ENCODE measurements at regions of chr9 and their contacts with region 1.

Region 1: DNA sequence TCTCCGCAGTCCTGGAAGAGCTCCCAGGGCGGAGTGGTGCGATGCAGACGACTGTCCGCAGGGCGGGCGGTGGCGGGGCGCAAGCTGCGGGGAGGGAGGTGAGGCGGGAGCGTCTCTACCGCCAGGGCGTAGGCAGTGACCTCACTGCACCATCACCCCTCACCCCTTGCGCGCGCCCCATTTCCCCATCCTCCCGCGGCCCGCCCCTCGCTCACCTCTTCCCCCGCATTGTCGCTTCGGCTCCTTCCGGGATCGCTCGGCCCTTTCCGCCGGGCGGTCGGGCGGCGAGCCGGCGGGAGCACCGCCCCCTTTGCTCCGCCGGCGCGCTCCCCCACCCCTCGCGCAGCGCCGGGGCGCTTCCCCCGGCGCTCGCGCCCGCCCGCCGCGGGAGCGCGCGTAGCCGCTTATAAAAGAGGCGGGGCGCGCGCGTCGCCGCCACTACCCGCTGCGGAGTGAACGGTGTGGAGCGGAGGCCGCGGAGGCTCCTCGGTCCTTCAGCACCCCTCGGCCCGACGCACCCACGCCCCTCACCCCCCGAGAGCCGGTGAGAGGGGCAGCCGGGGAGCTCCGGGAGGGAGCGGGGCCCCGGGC is at the start of gene SPTAN1:
- DNase-seq: peak; percentile 93
- H3K4me3 Mint-ChIP-seq: peak within 1 kb of the TSS; percentile 89
- H3K27ac Mint-ChIP-seq: peak within 1 kb of the TSS; percentile 91
- H3K4me1 Mint-ChIP-seq: peaks cover 43% of the 10 kb centered on the region
- H3K27me3 Mint-ChIP-seq: no peaks in the 10 kb centered on the region
- total RNA-seq, gene SPTAN1: 298 and 304 TPM in 2 replicates

Region 2: DNA sequence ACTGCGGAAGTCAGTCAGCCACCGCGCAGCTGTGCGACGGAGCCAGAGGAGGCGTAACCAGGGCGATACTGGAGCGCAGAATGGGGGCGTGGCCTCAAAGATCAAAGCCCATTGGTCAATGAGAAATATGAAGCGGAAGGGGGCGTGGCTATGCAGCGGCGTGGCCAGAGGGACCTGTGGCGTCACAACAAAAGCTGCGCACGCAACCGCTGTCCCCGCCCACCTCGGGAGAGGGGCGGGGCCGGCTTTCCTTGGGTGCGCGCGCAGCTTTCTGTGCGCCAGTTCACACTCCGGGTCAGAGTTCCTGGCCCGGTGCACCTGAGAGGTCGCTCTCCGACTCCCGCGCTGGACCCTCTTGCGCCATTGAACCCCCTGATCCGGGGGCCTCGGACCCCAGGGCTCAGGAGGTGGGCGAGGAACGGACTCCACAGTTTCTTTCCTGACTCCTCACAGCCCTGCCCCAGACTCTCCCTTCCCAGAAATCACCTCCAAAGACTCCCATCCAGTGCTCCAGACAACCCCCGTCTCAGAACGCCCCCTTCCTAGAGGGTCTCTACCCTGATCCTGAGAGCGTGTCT is 276.2 kb before region 1 on chr9 and contains the starts of genes GOLGA2 and SWI5:
- intact Hi-C with region 1: loop called (anchors 5 kb)
- DNase-seq: peak; percentile 100
- H3K4me3 Mint-ChIP-seq: peak within 1 kb of the TSS; percentile 98
- H3K27ac Mint-ChIP-seq: peak within 1 kb of the TSS; percentile 91
- H3K4me1 Mint-ChIP-seq: peaks cover 54% of the 10 kb centered on the region
- H3K27me3 Mint-ChIP-seq: no peaks in the 10 kb centered on the region
- total RNA-seq, gene GOLGA2: 52.3 and 53.0 TPM in 2 replicates
- total RNA-seq, gene SWI5: 10.4 and 13.3 TPM in 2 replicates

Region 3: GRCh38 chr9:128455849-128456612 is 96.2 kb before region 1 on chr9 and contains the start of gene ODF2:
- intact Hi-C with region 1: loop called (anchors 1 kb)
- DNase-seq: peak; percentile 98
- H3K4me3 Mint-ChIP-seq: peak within 1 kb of the TSS; percentile 93
- H3K27ac Mint-ChIP-seq: peak within 1 kb of the TSS; percentile 98
- H3K4me1 Mint-ChIP-seq: peaks cover 13% of the 10 kb centered on the region
- H3K27me3 Mint-ChIP-seq: peaks cover 3% of the 10 kb centered on the region
- total RNA-seq, gene ODF2: 55.6 and 57.6 TPM in 2 replicates

Region 4: GRCh38 chr9:128656416-128657343 is 104.4 kb after region 1 on chr9 and contains the start of gene DYNC2I2:
- intact Hi-C with region 1: loop called (anchors 1 kb)
- DNase-seq: peak; percentile 95
- H3K4me3 Mint-ChIP-seq: peak within 1 kb of the TSS; percentile 91
- H3K27ac Mint-ChIP-seq: peak within 1 kb of the TSS; percentile 100
- H3K4me1 Mint-ChIP-seq: peaks cover 15% of the 10 kb centered on the region
- H3K27me3 Mint-ChIP-seq: no peaks in the 10 kb centered on the region
- total RNA-seq, gene DYNC2I2: 41.5 and 43.9 TPM in 2 replicates

Region 5: DNA sequence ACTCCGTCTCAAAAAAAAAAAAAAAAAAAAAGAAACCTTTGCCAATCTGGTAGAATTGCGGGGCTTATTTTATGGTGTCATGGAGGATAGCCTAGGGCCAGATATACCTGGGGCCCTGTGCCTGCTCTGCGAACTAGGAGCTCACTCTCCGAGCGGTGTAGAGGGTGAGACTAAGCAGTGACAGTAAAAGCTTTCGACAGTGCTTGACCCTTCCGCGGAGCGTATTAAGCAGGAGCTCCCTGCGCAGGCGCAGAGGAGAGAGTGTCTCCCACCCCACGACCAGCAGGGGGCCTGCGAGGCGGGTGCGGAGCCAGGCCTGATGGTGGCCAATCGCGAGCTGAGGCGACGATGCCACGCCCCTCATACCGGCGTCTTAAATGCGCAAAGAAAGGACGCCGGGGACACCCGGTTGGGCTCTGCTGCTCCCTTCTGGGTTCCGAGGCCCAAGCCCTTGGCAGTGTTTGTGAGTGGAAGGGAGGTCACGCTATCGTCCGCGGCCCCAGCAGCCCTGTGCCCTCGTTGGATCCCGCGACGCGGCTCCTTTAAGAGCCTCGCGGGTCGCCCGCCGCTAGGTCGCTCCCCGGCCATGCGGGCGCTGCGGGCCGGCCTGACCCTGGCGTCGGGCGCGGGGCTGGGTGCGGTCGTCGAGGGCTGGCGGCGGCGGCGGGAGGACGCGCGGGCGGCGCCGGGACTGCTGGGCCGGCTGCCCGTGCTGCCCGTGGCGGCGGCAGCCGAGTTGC is 266.0 kb after region 1 on chr9 and contains the start of gene ENDOG:
- intact Hi-C with region 1: loop called (anchors 2 kb)
- DNase-seq: peak; percentile 99
- H3K4me3 Mint-ChIP-seq: peak within 1 kb of the TSS; percentile 88
- H3K27ac Mint-ChIP-seq: peak within 1 kb of the TSS; percentile 79
- H3K4me1 Mint-ChIP-seq: peaks cover 14% of the 10 kb centered on the region
- H3K27me3 Mint-ChIP-seq: no peaks in the 10 kb centered on the region
- total RNA-seq, gene ENDOG: 22.1 and 26.2 TPM in 2 replicates

Region 6: DNA sequence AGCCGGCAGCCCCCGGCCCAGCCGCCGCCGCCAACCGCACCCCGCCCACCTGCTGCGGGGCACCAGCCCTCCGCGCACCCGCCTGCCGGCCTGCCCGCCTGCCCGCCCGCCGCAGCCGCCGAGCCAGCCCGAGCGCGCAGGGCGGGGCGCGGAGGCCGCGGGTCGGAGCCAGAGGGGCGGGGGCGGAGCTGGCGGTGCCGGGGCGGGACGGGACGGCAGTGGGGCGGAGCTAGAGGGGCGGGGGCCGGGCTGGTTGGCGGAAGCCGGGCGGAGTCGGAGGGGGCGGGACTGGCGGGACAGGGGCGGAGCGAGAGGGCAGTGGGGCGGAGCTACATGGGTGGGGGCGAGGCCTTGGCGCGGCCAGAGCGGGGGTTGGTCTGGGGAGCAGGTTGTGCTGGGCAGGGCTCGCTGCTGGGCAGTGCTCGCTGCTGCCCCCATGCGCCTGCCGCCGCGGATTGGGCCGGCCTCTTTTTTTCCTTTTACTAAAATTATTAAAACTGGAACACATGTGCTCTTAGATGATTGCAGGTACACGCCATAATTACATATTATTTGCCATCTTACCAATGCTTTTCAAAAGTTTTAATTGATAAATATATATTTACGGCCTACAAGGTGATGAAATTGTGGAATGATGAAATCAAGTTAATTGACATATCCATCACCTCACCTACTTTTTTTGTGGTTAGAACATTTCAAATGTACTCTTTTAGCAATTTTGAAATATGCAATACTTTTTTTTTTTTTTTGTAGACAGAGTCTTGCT is 476.1 kb after region 1 on chr9 and contains the start of gene SH3GLB2:
- intact Hi-C with region 1: loop called (anchors 5 kb)
- DNase-seq: peak; percentile 85
- H3K4me3 Mint-ChIP-seq: peak within 1 kb of the TSS; percentile 91
- H3K27ac Mint-ChIP-seq: peak within 1 kb of the TSS; percentile 80
- H3K4me1 Mint-ChIP-seq: peaks cover 24% of the 10 kb centered on the region
- H3K27me3 Mint-ChIP-seq: no peaks in the 10 kb centered on the region
- total RNA-seq, gene SH3GLB2: 71.1 and 74.8 TPM in 2 replicates

Measured in activated T-helper 1 cell treated with anti-CD3 and anti-CD28 coated beads, Interleukin-12 subunit alpha, Interleukin-12 subunit beta, Interleukin-2, Interleukin-4 antibody, amounts not matched to agents 30 ng/mL and 10 ng/mL and 1 ng/mL, durations not matched to agents 14 hours and 24 hours and 36 hours (primary cell).